Activated CD4-positive, alpha-beta T cell treated with anti-CD3 and anti-CD28 coated beads for 36 hours (primary cell): ENCODE measurements at regions of chr2 and their contacts with region 1.

Region 1: DNA sequence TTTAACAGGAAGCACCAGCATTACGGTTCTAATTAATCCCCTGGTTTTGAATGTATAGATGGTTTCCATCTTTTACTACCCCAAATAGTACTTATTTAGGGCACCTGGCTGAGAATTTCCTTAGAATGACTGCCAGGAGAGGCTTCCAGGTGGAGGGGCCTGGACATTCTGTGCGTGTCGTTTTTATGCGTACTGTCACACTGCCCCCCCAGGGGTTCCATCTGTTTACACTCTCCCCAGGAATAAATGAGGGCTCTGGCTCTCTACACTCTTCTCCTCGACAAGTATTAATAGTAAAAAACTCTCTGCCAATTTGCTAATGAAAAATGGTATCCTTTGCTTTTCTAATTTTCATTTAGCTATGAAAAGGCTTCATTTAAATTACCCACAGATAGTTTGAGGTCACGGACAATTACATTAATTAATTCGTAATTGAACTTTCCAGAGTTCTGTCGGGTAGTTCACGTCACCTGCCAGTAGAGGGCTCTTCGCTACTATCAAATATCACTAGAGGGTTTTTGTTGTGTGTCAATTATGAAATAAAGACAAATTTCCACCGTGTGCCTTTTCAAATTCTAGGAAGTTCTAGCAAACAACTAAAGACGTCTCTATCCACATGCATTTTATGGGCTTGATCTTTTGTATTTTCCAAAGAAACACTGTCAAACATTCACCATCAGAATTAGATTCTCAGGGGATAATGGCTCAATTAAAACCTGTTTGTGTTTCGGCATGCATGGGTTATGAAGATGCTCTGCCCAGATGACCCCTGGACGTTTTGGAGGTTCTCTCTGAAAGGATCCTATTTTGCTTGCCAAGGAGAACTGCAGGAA is 88.8 kb upstream of the ASB18 start:
- DNase-seq: peak; percentile 48
- ATAC-seq: peak; percentile 36
- H3K4me3 Mint-ChIP-seq: no peak overlapping the region
- H3K27ac Mint-ChIP-seq: no peak overlapping the region
- H3K4me1 Mint-ChIP-seq: peaks cover 2% of the 10 kb centered on the region
- H3K27me3 Mint-ChIP-seq: peaks cover 2% of the 10 kb centered on the region

Region 2: GRCh38 chr2:236369661-236370062 is 16.7 kb after region 1 on chr2:
- CTCF ChIA-PET with region 1: no interaction called
- POLR2A ChIA-PET with region 1: no interaction called
- intact Hi-C with region 1: no loop called
- DNase-seq: no peak
- ATAC-seq: no peak
- H3K4me3 Mint-ChIP-seq: no peak overlapping the region
- H3K27ac Mint-ChIP-seq: no peak overlapping the region
- H3K4me1 Mint-ChIP-seq: peaks cover 36% of the 10 kb centered on the region
- H3K27me3 Mint-ChIP-seq: peaks cover 33% of the 10 kb centered on the region

Region 3: GRCh38 chr2:237026981-237027711 is 674.2 kb after region 1 on chr2:
- CTCF ChIA-PET with region 1: no interaction called
- POLR2A ChIA-PET with region 1: no interaction called
- intact Hi-C with region 1: loop called in 1 of 2 experiments (anchors 1 kb)
- DNase-seq: peak; percentile 66
- ATAC-seq: no peak
- H3K4me3 Mint-ChIP-seq: no peak overlapping the region
- H3K27ac Mint-ChIP-seq: no peak overlapping the region
- H3K4me1 Mint-ChIP-seq: no peaks in the 10 kb centered on the region
- H3K27me3 Mint-ChIP-seq: no peaks in the 10 kb centered on the region

Region 4: DNA sequence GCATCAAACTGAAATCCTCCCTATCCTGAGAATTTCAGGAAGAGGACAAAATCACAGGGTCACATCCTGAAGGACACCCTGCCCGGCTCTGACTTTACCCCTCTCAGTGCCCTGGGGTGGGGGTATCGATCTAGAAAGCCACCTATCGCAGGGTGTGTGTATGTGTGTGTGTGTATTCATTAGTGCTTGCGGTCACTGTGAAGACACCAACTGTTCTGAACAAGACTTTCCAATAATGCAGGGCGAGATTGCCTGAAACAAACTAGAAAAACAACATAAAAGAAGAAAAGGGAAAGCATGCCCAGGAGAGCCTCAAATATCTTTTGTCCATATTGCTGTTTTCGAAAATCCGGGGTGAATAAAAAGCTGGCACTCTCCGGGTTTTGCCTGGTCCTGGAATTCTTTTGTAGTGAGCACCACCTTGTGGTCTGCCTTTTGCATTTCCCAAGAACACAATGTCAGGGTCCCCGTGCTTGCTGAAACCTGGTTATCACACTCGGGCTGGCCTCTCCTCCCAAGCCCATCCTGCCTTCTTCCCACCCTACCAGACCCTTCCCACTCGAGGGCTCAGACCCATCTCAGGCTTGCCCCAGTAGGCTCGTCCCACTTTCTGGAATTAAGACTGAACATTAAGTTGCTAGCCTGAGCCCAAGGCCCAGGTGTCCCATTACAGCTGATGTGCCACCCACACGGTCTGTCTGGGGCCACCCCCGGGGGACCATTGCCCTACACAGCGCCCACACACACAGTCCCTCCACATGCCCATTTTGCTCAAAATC is 707.7 kb after region 1 on chr2:
- CTCF ChIA-PET with region 1: no interaction called
- POLR2A ChIA-PET with region 1: no interaction called
- intact Hi-C with region 1: loop called in 1 of 2 experiments (anchors 1 kb)
- DNase-seq: peak; percentile 42
- ATAC-seq: no peak
- H3K4me3 Mint-ChIP-seq: no peak overlapping the region
- H3K27ac Mint-ChIP-seq: no peak overlapping the region
- H3K4me1 Mint-ChIP-seq: peaks cover 16% of the 10 kb centered on the region
- H3K27me3 Mint-ChIP-seq: no peaks in the 10 kb centered on the region

Region 5: GRCh38 chr2:237072067-237072931 is 719.3 kb after region 1 on chr2:
- CTCF ChIA-PET with region 1: interaction called, 4 read pairs
- POLR2A ChIA-PET with region 1: no interaction called
- intact Hi-C with region 1: loop called (anchors 1 to 2 kb)
- DNase-seq: peak; percentile 82
- ATAC-seq: peak; percentile 39
- H3K4me3 Mint-ChIP-seq: no peak overlapping the region
- H3K27ac Mint-ChIP-seq: no peak overlapping the region
- H3K4me1 Mint-ChIP-seq: no peaks in the 10 kb centered on the region
- H3K27me3 Mint-ChIP-seq: no peaks in the 10 kb centered on the region